ENCODE measurements at regions of chr12 and their contacts with region 1.

Region 1: DNA sequence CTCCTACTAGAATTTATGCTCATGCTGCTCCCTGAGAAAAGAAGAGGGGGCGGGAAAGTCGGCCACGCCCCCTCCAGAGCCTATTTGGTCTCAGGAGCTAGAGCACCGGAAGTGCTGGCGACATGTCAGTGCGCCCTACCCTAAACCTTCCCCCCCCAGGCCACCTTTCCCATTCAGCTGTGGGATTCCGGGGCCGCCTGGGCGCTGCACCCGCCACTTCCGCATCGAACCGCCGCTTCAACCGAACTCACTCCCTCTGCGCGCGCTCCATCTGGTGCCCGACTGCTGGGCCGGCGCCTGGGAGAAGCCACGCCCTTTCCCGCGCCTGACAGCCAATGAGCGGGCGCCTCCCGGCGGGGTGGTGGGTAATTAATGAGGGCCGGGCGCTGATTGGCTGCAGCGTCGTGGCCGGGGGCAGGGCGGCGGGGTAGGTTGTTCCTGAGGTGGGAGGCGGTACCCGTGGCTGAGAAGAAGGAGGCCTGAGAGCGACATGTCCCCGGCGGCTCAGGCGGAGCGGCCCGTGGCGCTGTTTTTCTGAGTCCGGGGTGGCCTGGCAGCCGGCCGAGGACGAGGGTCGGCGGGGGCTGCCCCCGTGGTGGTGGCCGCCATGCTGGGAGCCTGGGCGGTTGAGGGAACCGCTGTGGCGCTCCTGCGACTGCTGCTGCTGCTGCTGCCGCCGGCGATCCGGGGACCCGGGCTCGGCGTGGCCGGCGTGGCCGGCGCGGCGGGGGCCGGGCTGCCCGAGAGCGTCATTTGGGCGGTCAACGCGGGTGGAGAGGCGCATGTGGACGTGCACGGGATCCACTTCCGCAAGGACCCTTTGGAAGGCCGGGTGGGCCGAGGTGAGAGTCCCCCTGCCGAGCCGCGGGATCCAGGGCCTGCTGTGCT is at the start of gene MLEC:
- DNase-seq: peak; percentile 99
- ATAC-seq: peak; percentile 86
- H3K4me3 Mint-ChIP-seq: peak within 1 kb of the TSS; percentile 92
- H3K27ac Mint-ChIP-seq: peak within 1 kb of the TSS; percentile 85
- H3K4me1 Mint-ChIP-seq: peaks cover 46% of the 10 kb centered on the region
- H3K27me3 Mint-ChIP-seq: no peaks in the 10 kb centered on the region
- total RNA-seq, gene MLEC: 70.6 to 89.5 TPM

Region 2: GRCh38 chr12:120469450-120470149 is 217.3 kb before region 1 on chr12 and contains the start of gene SRSF9:
- CTCF ChIA-PET with region 1: no interaction called
- POLR2A ChIA-PET with region 1: no interaction called
- intact Hi-C with region 1: loop called in 1 of 2 experiments (anchors 1 kb)
- DNase-seq: peak; percentile 98
- ATAC-seq: peak; percentile 94
- H3K4me3 Mint-ChIP-seq: peak within 1 kb of the TSS; percentile 79
- H3K27ac Mint-ChIP-seq: peak within 1 kb of the TSS; percentile 88
- H3K4me1 Mint-ChIP-seq: peaks cover 40% of the 10 kb centered on the region
- H3K27me3 Mint-ChIP-seq: no peaks in the 10 kb centered on the region
- total RNA-seq, gene SRSF9: 140 to 209 TPM

Region 3: DNA sequence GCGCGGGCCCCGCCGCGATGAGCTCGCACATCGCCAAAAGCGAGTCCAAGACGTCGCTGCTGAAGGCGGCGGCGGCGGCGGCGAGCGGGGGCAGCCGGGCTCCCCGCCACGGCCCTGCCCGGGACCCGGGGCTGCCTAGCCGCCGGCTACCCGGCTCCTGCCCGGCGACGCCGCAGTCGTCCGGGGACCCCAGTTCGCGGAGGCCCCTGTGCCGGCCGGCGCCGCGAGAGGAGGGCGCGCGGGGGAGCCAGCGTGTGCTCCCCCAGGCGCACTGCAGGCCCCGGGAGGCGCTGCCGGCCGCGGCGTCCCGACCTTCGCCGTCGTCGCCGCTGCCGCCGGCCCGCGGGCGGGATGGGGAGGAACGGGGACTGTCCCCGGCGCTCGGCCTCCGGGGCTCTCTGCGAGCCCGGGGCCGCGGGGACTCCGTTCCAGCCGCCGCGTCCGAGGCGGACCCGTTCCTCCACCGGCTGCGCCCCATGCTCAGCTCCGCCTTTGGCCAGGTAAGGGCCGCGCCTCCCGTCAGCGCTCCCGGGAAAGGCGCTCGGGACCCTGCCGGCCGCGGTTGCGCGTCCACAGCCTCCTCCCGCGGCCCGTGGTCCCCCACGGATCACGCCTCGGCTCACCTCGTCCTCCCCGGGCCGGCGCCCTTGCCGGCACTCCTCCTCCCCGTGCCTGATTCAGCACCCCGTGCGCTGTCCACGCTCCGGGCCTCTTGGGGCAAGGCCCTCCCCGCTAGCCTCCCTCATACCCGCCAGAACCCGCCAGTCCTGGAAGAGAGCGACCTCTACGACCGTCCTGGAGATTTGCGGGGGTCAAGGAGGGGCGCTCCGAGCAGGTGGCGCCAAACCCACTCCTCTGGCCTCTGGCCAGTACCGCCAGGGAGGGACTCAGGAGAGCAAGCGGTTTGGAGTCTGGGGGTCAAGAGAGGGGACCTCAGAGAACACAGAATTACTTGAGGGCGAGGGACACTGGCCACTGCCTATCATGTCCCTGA is 45.8 kb before region 1 on chr12:
- CTCF ChIA-PET with region 1: interaction called, 3 read pairs
- POLR2A ChIA-PET with region 1: interaction called, 3 read pairs
- intact Hi-C with region 1: loop called (anchors 2 kb)
- DNase-seq: peak; percentile 78
- ATAC-seq: peak; percentile 77
- H3K4me3 Mint-ChIP-seq: peak overlapping the region; percentile 63
- H3K27ac Mint-ChIP-seq: no peak overlapping the region
- H3K4me1 Mint-ChIP-seq: peaks cover 6% of the 10 kb centered on the region
- H3K27me3 Mint-ChIP-seq: peaks cover 43% of the 10 kb centered on the region

Region 4: GRCh38 chr12:120904197-120904773 is 217.4 kb after region 1 on chr12 and contains the start of gene SPPL3:
- CTCF ChIA-PET with region 1: interaction called, 3 read pairs
- POLR2A ChIA-PET with region 1: no interaction called
- intact Hi-C with region 1: loop called in 1 of 2 experiments (anchors 1 kb)
- DNase-seq: peak; percentile 96
- ATAC-seq: peak; percentile 81
- H3K4me3 Mint-ChIP-seq: peak within 1 kb of the TSS; percentile 92
- H3K27ac Mint-ChIP-seq: peak within 1 kb of the TSS; percentile 95
- H3K4me1 Mint-ChIP-seq: peaks cover 28% of the 10 kb centered on the region
- H3K27me3 Mint-ChIP-seq: no peaks in the 10 kb centered on the region
- total RNA-seq, gene SPPL3: 29.5 to 48.2 TPM

Region 5: DNA sequence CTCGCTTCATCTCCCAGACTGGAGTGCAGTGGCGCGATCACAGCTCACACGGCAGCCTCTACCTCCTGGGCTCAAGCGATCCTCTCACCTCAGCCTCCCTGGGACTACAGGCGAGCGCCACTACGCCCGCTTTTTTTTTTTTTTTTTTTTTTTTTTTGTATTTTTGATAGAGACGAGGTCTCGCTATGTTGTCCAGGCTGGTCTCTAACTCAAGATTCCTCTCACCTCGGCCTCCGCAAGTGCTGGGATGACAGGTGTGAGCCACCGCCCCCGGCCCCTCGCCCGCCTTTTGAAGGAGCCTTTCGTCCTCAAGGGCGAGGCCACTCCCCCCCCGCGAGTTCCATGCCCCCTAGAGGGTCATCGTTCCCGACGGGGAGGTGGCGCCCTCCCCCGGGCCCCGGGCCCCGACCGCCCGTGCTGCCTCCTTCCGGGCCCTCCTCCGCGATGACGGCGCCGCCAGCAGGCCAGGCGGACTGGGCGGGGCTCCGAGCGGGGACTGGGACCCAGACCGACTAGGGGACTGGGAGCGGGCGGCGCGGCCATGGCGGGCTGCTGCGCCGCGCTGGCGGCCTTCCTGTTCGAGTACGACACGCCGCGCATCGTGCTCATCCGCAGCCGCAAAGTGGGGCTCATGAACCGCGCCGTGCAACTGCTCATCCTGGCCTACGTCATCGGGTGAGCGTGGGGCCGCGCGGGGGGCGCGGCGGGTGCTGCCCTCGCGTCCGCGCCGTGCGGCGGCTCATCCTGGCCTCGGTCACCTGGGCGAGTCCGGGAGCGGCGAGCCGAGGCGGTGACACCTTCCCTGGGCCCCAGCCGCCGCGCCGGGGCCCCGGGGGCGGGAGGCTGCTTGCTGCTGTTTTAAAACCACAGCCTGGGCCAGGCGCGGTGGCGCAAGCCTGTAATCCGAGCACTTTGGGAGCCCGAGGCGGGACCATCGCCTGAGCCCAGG is 523.0 kb after region 1 on chr12 and contains the start of gene P2RX4:
- CTCF ChIA-PET with region 1: no interaction called
- POLR2A ChIA-PET with region 1: no interaction called
- intact Hi-C with region 1: loop called in 1 of 2 experiments (anchors 5 kb)
- DNase-seq: peak; percentile 93
- ATAC-seq: peak; percentile 79
- H3K4me3 Mint-ChIP-seq: peak within 1 kb of the TSS; percentile 79
- H3K27ac Mint-ChIP-seq: peak within 1 kb of the TSS; percentile 89
- H3K4me1 Mint-ChIP-seq: peaks cover 31% of the 10 kb centered on the region
- H3K27me3 Mint-ChIP-seq: no peaks in the 10 kb centered on the region
- total RNA-seq, gene P2RX4: 21.2 to 21.6 TPM

Region 6: DNA sequence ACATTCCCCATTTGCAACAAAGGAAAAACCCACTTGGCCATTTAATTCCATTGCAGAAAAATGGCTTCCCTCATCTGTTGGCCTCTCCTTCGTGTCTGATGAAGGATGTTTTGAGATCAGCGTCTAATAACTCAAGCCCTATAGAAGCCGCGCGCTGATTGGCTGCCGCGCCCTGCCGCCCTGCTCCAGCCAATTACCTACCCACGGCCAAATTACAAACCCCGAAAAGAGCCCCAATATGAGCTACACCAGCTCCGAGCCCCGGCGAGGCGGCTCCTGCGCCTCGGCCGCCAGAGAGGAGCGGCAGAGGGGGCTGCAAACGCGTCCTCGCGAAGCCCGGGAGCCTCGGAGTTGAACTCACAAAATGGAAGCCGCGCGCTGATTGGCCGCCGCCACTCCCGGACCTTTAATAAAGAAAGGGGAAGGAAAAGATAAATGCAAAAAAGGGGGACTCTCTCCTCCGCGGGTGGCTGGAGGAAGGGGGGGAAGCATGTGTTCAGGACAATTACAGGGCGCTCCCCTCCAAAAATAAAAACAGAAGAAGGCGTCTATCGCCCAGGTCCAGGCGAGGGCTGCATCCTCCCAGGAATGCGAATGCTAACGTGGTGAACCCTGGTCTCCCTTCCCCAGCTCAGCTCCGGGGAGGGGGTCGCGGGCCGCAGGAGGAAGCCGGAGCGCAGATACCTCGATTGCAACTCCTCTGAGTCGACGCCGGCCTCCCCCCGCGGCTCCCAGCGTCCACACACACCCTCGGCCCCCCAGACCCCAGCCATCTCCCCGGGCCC is 1116.1 kb after region 1 on chr12:
- CTCF ChIA-PET with region 1: no interaction called
- POLR2A ChIA-PET with region 1: no interaction called
- intact Hi-C with region 1: loop called in 1 of 2 experiments (anchors 5 kb)
- DNase-seq: peak; percentile 95
- ATAC-seq: peak; percentile 62
- H3K4me3 Mint-ChIP-seq: peak overlapping the region; percentile 88
- H3K27ac Mint-ChIP-seq: peak overlapping the region; percentile 99
- H3K4me1 Mint-ChIP-seq: peaks cover 30% of the 10 kb centered on the region
- H3K27me3 Mint-ChIP-seq: no peaks in the 10 kb centered on the region

Measured in activated CD4-positive, alpha-beta T cell treated with anti-CD3 and anti-CD28 coated beads for 36 hours (primary cell).